ENCODE measurements at regions of chr11 and their contacts with region 1.

Region 1: DNA sequence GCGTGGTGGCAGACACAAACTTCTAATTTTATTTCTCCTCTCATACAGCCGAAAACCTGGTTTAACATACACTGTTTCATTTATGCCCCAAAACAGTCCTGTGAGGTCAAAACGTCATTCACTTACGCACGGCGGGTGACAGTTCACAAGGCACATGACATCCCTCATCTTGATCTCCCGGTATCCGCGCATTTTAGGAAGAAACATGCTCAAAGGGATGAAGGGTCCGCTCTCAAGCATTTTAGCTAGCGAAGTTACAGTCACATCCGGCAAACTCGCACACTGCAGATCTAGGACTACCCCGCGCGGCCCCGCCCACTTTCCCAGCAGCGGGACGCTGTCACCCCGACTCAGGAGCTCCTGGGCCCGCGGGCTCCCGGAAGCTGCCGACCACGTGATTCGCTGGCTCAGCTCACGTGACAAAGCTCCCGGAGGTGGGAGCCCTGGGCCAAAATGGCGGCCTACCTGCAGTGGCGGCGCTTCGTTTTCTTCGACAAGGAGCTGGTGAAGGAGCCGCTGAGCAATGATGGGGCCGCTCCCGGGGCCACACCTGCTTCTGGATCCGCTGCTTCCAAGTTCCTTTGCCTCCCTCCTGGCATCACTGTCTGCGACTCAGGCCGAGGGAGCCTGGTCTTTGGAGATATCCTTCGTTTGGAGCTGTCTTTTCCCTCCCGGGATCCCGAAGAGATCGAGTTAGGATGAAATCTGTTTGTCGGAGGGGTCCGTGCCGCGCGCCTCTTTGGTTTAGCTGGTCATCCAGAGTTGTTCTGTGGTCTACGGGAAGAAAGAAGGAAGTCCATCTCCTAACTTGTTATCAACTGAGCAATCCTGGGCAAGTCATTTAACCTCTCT is at the start of gene VPS11:
- DNase-seq: peak; percentile 98
- H3K4me3 Mint-ChIP-seq: peak within 1 kb of the TSS; percentile 96
- H3K27ac Mint-ChIP-seq: peak within 1 kb of the TSS; percentile 97
- H3K4me1 Mint-ChIP-seq: peaks cover 31% of the 10 kb centered on the region
- H3K27me3 Mint-ChIP-seq: peaks cover 2% of the 10 kb centered on the region
- total RNA-seq, gene VPS11: 23.5 and 24.0 TPM in 2 replicates

Region 2: GRCh38 chr11:118438314-118438931 is 629.2 kb before region 1 on chr11:
- intact Hi-C with region 1: no loop called
- DNase-seq: peak; percentile 54
- H3K4me3 Mint-ChIP-seq: peak overlapping the region; percentile 91
- H3K27ac Mint-ChIP-seq: peak overlapping the region; percentile 89
- H3K4me1 Mint-ChIP-seq: peaks cover 68% of the 10 kb centered on the region
- H3K27me3 Mint-ChIP-seq: no peaks in the 10 kb centered on the region

Region 3: DNA sequence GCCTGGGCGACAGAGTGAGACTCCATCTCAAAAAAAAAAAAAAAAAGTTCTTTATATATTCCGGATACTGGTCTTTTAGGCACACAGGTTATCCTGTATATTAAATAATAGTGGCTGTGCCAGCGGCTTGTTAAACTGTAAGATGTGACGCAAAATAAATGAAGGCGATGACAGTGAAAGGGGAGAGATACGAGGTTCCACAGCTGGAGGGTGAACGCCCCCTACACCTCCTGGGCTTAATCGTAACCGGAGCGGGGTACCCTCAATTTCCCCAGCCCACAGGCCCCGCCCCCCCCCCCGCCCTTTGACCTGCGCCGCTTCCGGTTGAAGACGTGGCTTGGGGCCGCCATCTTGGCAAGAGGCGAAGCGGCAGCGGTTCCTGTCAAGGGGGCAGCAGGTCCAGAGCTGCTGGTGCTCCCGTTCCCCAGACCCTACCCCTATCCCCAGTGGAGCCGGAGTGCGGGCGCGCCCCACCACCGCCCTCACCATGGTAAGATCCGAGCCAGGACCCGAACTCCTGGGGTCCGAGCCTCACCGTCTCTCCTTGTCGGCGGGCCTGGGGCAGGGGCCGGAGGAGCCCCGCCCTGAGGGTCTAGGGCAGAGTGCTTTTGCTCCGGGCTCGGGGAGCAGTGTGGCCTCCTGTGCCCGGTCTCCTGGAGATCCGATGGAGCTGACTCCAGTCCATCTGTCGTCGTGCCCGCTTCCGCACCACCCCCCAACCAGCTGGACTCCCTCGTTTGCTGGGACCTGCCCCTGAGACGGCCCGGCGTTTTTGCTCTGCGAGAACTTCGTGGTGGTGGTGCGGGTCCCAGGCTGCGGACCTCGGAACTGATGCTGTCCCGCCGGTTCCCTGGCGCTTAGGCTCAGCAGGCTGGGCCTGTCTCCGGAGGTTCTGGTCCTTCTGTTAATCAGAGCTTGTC is 495.3 kb before region 1 on chr11 and contains the start of gene ARCN1:
- intact Hi-C with region 1: loop called (anchors 5 kb)
- DNase-seq: peak; percentile 69
- H3K4me3 Mint-ChIP-seq: peak within 1 kb of the TSS; percentile 98
- H3K27ac Mint-ChIP-seq: peak within 1 kb of the TSS; percentile 96
- H3K4me1 Mint-ChIP-seq: peaks cover 51% of the 10 kb centered on the region
- H3K27me3 Mint-ChIP-seq: no peaks in the 10 kb centered on the region
- total RNA-seq, gene ARCN1: 162 and 165 TPM in 2 replicates

Region 4: DNA sequence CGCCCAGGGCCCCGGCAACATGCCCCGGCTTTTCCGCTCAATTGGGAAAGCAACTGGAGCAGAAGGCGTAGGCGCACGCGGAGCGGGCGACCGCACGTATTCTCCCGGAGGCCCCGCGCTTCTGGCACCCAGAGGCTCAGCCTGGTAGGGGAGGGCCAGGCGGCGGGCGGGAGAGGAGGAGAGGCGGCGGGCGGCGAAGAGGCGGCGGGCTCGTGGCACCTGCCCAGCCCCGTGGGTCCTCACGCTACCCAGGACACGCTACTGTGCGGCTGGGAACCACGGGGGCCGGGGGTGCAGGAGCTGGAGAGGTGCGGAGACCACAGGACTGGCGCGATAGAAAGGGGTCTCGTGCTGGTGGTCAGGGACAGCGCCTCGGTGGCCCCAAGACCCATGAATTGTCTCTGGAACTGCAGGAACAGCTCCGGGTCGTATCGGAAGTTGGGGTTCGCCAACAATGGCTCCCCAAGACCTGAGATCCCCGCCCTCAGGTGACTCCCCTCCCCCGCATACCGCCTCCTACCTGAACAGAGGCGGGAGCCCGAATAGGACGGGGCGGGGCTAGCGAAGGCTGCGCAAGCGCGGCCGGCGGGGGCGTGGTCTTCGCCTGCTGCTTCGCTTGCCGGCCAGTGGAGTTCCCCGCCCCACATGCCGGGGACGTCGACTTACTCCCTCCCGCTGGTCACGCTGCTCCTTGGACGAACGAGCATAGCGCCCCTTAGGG is 37.1 kb before region 1 on chr11 and contains the start of gene SLC37A4:
- intact Hi-C with region 1: loop called (anchors 1 kb)
- DNase-seq: peak; percentile 99
- H3K4me3 Mint-ChIP-seq: peak within 1 kb of the TSS; percentile 80
- H3K27ac Mint-ChIP-seq: peak within 1 kb of the TSS; percentile 86
- H3K4me1 Mint-ChIP-seq: peaks cover 15% of the 10 kb centered on the region
- H3K27me3 Mint-ChIP-seq: no peaks in the 10 kb centered on the region
- total RNA-seq, gene SLC37A4: 24.3 and 28.7 TPM in 2 replicates

Region 5: GRCh38 chr11:119095066-119095880 is 27.7 kb after region 1 on chr11:
- intact Hi-C with region 1: loop called (anchors 1 kb)
- DNase-seq: peak; percentile 100
- H3K4me3 Mint-ChIP-seq: peak overlapping the region; percentile 95
- H3K27ac Mint-ChIP-seq: peak overlapping the region; percentile 91
- H3K4me1 Mint-ChIP-seq: peaks cover 59% of the 10 kb centered on the region
- H3K27me3 Mint-ChIP-seq: peaks cover 4% of the 10 kb centered on the region

Region 6: GRCh38 chr11:119121008-119121810 is 53.6 kb after region 1 on chr11 and contains the start of gene HINFP:
- intact Hi-C with region 1: loop called (anchors 1 kb)
- DNase-seq: peak; percentile 99
- H3K4me3 Mint-ChIP-seq: peak within 1 kb of the TSS; percentile 98
- H3K27ac Mint-ChIP-seq: peak within 1 kb of the TSS; percentile 83
- H3K4me1 Mint-ChIP-seq: peaks cover 36% of the 10 kb centered on the region
- H3K27me3 Mint-ChIP-seq: no peaks in the 10 kb centered on the region
- total RNA-seq, gene HINFP: 31.2 and 35.2 TPM in 2 replicates

Region 7: DNA sequence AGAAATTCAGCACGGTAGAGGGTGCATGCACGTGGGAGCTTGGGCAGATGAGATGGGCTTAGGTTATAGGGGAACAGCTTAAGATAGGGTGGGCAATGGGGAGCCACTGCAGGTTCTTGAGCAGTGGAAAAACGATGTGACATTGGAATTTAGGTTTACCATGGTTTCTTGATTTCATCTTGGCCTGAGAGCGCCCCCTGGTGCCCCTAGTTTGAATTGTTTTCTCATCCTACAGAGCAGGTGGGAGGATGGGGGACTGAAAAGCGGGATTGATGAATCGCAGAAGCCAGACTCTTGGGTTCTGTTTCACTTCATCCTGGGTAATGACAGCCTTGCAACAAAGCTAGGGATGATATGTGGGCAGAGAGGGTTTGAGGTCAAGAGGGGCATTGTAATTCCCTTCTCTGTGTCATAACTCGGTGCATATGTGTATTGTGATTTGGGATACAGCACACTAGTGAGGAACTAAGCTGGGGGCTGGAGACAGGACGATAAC is 256.0 kb after region 1 on chr11:
- intact Hi-C with region 1: loop called (anchors 2 kb)
- DNase-seq: peak; percentile 64
- H3K4me3 Mint-ChIP-seq: no peak overlapping the region
- H3K27ac Mint-ChIP-seq: no peak overlapping the region
- H3K4me1 Mint-ChIP-seq: peaks cover 27% of the 10 kb centered on the region
- H3K27me3 Mint-ChIP-seq: peaks cover 13% of the 10 kb centered on the region

Measured in activated T-helper 1 cell treated with anti-CD3 and anti-CD28 coated beads, Interleukin-12 subunit alpha, Interleukin-12 subunit beta, Interleukin-2, Interleukin-4 antibody, amounts not matched to agents 30 ng/mL and 10 ng/mL and 1 ng/mL, durations not matched to agents 14 hours and 24 hours and 36 hours (primary cell).